Endothelial cell of umbilical vein (primary cell): ENCODE measurements at regions of chr14 and their contacts with region 1.

Region 1: DNA sequence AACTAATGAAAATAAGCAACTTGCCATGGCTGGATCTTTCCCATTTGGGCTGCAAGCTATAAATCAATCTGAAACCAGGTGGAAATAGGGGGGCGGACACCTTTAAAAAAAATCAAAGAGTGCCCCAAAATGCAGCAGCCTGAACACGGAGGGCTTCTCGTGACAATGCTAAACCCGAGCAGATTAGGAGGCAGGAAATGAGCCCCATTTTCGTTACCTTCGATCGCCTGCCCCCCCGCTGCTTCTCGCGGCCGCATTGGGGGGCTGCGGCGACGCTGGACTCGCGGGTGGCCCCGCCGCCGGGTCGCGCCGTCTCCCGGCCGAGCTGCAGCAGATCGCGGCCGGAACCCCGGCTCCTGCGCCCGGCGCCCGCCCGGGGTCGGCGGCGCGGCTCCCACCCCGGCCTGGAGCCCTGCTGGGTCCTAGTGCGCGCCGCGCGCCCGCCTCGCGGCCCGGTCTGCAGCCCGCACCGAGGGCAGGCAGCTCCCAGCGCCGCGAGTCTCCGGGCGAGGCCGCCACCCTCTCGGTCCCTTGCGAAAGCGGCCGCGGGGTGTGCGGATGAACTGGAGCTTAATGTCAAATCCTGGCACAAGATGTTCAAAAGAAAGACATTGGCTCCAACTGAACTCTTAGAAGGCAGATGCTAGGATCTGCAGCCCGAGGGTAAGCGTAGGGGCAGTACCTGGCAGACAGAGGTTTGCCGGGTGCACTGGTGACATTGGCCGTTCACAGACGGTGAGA is 201.9 kb upstream of the FOXN3 start:
- DNase-seq: peak; percentile 61
- H3K4me3 ChIP-seq: peak overlapping the region; percentile 91 to 97 (median 94)
- H3K27ac ChIP-seq: peak overlapping the region; percentile 77
- H3K4me1 ChIP-seq: peaks cover 28% of the 10 kb centered on the region
- H3K27me3 ChIP-seq: no peaks in the 10 kb centered on the region
- CTCF ChIP-seq: no peak
- POLR2A ChIP-seq: peak; percentile 65

Region 2: GRCh38 chr14:89178802-89179535 is 440.0 kb before region 1 on chr14:
- CTCF ChIA-PET with region 1: no interaction called
- POLR2A ChIA-PET with region 1: no interaction called
- dilution Hi-C with region 1: no loop called
- intact Hi-C with region 1: loop called (anchors 1 kb)
- DNase-seq: no peak
- H3K4me3 ChIP-seq: no peak overlapping the region
- H3K27ac ChIP-seq: no peak overlapping the region
- H3K4me1 ChIP-seq: no peaks in the 10 kb centered on the region
- H3K27me3 ChIP-seq: no peaks in the 10 kb centered on the region
- CTCF ChIP-seq: no peak
- POLR2A ChIP-seq: no peak

Region 3: GRCh38 chr14:89303457-89304435 is 315.2 kb before region 1 on chr14:
- CTCF ChIA-PET with region 1: no interaction called
- POLR2A ChIA-PET with region 1: no interaction called
- dilution Hi-C with region 1: no loop called
- intact Hi-C with region 1: loop called (anchors 5 kb)
- DNase-seq: peak; percentile 83
- H3K4me3 ChIP-seq: peak overlapping the region in 1 of 3 experiments; percentile 24
- H3K27ac ChIP-seq: peak overlapping the region; percentile 71
- H3K4me1 ChIP-seq: peaks cover 40% of the 10 kb centered on the region
- H3K27me3 ChIP-seq: no peaks in the 10 kb centered on the region
- CTCF ChIP-seq: no peak
- POLR2A ChIP-seq: no peak

Region 4: GRCh38 chr14:89504602-89505313 is 114.2 kb before region 1 on chr14:
- CTCF ChIA-PET with region 1: interaction called, 3 read pairs
- POLR2A ChIA-PET with region 1: no interaction called
- dilution Hi-C with region 1: no loop called
- intact Hi-C with region 1: loop called (anchors 2 kb)
- DNase-seq: no peak
- H3K4me3 ChIP-seq: no peak overlapping the region
- H3K27ac ChIP-seq: no peak overlapping the region
- H3K4me1 ChIP-seq: peaks cover 17% of the 10 kb centered on the region
- H3K27me3 ChIP-seq: no peaks in the 10 kb centered on the region
- CTCF ChIP-seq: no peak
- POLR2A ChIP-seq: no peak

Region 5: DNA sequence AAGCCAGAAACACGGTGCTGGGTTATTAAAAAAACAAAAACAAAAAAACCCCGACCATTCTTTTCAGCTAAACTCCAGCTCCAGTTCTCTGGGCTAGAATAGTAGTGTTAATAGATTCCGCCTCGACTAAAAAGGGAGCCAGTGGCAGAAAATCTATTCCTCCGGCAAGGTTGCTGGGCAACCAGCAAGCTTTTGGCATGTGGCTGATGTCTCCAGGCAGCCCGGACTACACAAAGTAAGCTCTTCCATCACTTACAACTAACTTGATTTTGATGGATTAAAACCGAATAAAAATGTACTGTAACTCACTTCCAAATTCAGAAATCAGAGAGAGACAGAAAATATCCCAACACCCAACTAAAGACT is 75.6 kb before region 1 on chr14:
- CTCF ChIA-PET with region 1: no interaction called
- POLR2A ChIA-PET with region 1: no interaction called
- dilution Hi-C with region 1: no loop called
- intact Hi-C with region 1: no loop called
- DNase-seq: no peak
- H3K4me3 ChIP-seq: no peak overlapping the region
- H3K27ac ChIP-seq: no peak overlapping the region
- H3K4me1 ChIP-seq: peaks cover 8% of the 10 kb centered on the region
- H3K27me3 ChIP-seq: no peaks in the 10 kb centered on the region
- CTCF ChIP-seq: no peak
- POLR2A ChIP-seq: no peak

Region 6: DNA sequence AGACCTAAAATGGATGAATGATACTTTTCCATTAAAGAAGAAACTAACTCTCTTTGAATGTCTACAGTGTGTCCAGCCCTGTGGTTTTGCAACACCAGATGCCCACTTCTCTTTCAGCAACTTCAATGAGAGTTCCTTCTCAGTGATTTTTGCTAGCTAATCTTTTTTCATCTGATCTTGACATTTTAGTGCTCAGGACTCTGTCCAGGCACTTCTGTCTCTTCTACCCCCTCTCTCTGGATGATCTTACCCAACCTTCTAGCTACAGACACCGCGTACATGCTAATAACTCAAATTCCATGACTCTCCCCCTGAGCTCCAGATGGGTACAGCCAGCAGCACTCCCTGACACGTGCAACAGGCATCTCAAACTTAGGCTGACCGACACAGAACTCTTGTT is 40.8 kb before region 1 on chr14:
- CTCF ChIA-PET with region 1: no interaction called
- POLR2A ChIA-PET with region 1: no interaction called
- dilution Hi-C with region 1: no loop called
- intact Hi-C with region 1: no loop called
- DNase-seq: no peak
- H3K4me3 ChIP-seq: no peak overlapping the region
- H3K27ac ChIP-seq: no peak overlapping the region
- H3K4me1 ChIP-seq: no peaks in the 10 kb centered on the region
- H3K27me3 ChIP-seq: no peaks in the 10 kb centered on the region
- CTCF ChIP-seq: no peak
- POLR2A ChIP-seq: no peak

Region 7: DNA sequence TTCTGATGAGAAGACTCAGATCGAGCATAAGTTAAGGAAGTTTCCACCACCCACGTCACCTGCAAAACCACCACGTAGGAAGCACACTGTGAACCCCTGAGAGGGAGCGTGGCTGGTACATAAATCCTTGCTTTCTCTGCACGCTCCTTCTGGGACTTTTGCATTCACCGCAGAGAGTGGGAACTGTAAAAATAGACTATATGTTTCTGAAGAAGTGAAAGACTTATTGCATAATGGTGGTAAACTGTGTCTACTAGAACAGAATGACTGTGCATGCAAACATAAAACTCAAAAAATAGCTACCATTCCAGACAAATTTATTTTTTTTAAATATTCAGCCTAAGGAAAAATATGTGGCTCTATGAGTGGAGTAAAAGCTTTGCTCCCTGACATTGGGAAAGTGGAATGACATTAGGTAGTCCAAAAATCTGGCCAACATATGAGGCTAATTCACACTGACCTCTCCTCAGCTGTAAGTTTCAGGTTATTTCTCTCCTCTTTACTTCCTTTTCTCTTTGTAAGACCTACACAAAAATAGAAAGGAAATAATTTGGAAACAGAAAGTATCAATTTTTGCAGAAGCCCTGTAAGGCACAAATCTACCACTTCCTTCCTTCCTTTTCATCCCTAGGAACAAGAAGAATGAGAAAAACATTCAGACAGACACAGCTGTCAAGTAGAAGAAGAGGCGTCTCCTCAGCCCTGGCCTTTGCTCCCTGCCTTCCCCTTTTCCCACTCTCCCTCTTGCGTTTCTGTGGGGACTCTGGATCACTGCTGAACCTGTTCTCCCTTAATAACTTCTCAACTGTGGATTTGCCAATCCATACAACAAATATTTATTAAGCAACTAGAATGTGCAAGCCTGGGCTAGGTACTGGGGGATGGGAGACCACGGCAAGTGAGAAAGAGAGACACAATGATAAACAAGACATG is 62.4 kb after region 1 on chr14:
- CTCF ChIA-PET with region 1: no interaction called
- POLR2A ChIA-PET with region 1: no interaction called
- dilution Hi-C with region 1: no loop called
- intact Hi-C with region 1: no loop called
- DNase-seq: no peak
- H3K4me3 ChIP-seq: no peak overlapping the region
- H3K27ac ChIP-seq: no peak overlapping the region
- H3K4me1 ChIP-seq: no peaks in the 10 kb centered on the region
- H3K27me3 ChIP-seq: no peaks in the 10 kb centered on the region
- CTCF ChIP-seq: no peak
- POLR2A ChIP-seq: no peak

Region 8: GRCh38 chr14:89773644-89774316 is 154.8 kb after region 1 on chr14:
- CTCF ChIA-PET with region 1: no interaction called
- POLR2A ChIA-PET with region 1: no interaction called
- dilution Hi-C with region 1: no loop called
- intact Hi-C with region 1: loop called (anchors 5 kb)
- DNase-seq: peak; percentile 12
- H3K4me3 ChIP-seq: no peak overlapping the region
- H3K27ac ChIP-seq: no peak overlapping the region
- H3K4me1 ChIP-seq: peaks cover 34% of the 10 kb centered on the region
- H3K27me3 ChIP-seq: no peaks in the 10 kb centered on the region
- CTCF ChIP-seq: no peak
- POLR2A ChIP-seq: no peak

Region 9: GRCh38 chr14:89915114-89915878 is 296.3 kb after region 1 on chr14:
- CTCF ChIA-PET with region 1: no interaction called
- POLR2A ChIA-PET with region 1: no interaction called
- dilution Hi-C with region 1: no loop called
- intact Hi-C with region 1: loop called (anchors 1 kb)
- DNase-seq: peak; percentile 79
- H3K4me3 ChIP-seq: no peak overlapping the region
- H3K27ac ChIP-seq: no peak overlapping the region
- H3K4me1 ChIP-seq: no peaks in the 10 kb centered on the region
- H3K27me3 ChIP-seq: no peaks in the 10 kb centered on the region
- CTCF ChIP-seq: peak; percentile 75
- POLR2A ChIP-seq: no peak

Region 10: DNA sequence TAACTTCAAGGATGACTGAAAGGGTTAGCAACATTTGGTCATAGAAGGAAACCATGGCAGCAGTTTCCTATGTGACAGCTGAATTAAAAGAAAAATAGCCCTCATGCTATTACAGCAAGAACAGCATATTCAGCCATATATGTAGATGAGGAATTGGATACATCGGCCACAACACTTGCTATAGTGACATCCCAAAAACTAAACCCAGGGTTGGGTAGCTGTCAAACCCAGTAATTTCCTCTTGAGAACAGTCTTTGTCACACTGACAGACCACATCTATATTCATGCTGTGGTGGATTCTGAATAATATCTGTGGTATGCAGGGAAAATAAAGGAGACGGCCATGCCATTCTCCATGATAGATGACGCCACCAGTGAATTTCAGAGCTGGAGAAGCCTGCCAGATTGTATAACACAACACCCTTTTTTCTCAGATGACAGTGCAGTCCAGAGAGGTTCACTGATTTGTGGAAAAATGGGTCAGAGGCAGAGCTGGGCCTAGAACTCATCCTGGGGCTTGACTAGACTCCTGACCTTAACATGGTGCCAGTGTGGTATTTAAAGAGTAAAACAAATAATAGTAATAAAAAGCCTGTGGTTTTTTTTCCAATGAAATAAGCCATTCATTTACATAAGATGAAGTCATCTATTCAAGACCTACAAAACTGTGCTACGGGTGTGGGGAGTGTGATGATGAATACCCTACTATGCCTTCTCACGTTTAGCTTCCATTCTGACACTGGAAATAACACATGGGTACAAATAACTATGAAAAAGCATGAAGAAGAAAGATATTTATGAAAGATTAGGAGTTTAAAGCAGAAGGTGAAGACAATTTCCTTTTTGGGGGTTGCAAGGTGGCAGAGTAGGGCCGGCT is 303.3 kb after region 1 on chr14:
- CTCF ChIA-PET with region 1: no interaction called
- POLR2A ChIA-PET with region 1: no interaction called
- dilution Hi-C with region 1: no loop called
- intact Hi-C with region 1: loop called (anchors 5 kb)
- DNase-seq: no peak
- H3K4me3 ChIP-seq: no peak overlapping the region
- H3K27ac ChIP-seq: peak overlapping the region; percentile 49
- H3K4me1 ChIP-seq: peaks cover 23% of the 10 kb centered on the region
- H3K27me3 ChIP-seq: no peaks in the 10 kb centered on the region
- CTCF ChIP-seq: no peak
- POLR2A ChIP-seq: no peak